Activated CD4-positive, alpha-beta memory T cell treated with anti-CD3 and anti-CD28 coated beads for 36 hours (primary cell): ENCODE measurements at regions of chr11 and their contacts with region 1.

Region 1: DNA sequence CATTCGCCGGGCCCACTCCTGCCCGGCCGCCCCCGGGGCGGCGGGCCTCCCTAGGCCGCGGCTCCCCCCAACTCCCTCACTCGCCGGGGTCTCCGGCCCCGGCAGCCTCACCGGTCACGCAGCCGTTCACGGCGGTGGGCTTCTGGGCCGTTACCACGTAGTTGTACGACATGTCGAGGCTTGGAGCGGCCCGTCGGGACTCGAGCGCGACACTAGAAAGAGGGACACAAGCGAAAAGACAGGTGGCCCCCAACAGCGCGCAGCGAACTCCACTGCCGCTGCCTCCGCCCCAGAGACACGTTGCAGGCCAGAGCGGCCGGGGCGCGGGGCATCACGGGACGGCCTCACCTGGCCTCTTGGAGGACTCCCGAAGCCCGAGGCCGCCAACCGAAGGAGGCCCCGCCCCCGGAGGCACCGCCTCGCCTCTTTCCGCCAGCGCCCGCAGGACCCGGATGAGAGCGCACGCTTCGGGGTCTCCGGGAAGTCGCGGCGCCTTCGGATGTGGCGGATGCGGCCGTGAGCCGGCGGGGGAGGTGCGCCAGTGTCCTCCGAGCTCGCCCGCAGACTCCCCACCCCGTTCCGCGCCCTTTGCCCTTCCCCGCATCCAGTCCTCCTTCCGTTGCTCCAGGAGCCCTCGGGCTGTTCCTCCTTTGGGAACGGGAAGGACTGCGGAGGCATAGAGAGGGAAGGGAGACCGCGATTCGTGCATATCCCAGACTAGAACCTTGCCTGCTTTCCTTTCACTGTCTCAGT is at the starts of genes DDB1 and TKFC:
- DNase-seq: peak; percentile 99
- H3K4me3 Mint-ChIP-seq: peak within 1 kb of the TSS; percentile 97
- H3K27ac Mint-ChIP-seq: peak within 1 kb of the TSS; percentile 97
- H3K4me1 Mint-ChIP-seq: peaks cover 55% of the 10 kb centered on the region
- H3K27me3 Mint-ChIP-seq: no peaks in the 10 kb centered on the region
- total RNA-seq, gene DDB1: 222 to 223 TPM
- total RNA-seq, gene TKFC: 118 to 120 TPM

Region 2: GRCh38 chr11:60913793-60914632 is 419.0 kb before region 1 on chr11 and contains the start of gene TMEM109:
- CTCF ChIA-PET with region 1: interaction called, 3 read pairs
- POLR2A ChIA-PET with region 1: no interaction called
- intact Hi-C with region 1: loop called (anchors 10 kb)
- DNase-seq: peak; percentile 92
- H3K4me3 Mint-ChIP-seq: peak within 1 kb of the TSS; percentile 92
- H3K27ac Mint-ChIP-seq: peak within 1 kb of the TSS; percentile 91
- H3K4me1 Mint-ChIP-seq: peaks cover 56% of the 10 kb centered on the region
- H3K27me3 Mint-ChIP-seq: no peaks in the 10 kb centered on the region
- total RNA-seq, gene TMEM109: 101 to 106 TPM

Region 3: DNA sequence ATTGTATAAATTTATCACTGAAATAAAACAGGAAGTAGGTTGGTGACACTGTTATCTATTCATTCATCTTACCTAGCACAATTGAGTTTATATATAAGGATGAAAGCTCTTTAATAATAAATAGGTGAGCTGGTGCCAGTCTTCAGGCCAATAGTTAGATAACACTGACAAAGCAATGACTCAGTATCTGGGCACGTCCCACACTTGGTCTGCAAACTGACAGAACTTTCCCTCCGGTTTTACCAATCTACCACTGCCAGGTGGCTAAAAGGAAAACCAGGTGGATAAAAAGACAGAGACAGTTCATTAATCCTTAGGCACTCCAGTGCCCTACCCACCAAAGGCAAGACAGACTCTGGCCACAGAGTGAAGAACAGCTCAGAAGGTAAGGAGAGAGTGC is 17.7 kb before region 1 on chr11:
- CTCF ChIA-PET with region 1: interaction called, 12 read pairs
- POLR2A ChIA-PET with region 1: interaction called, 4 read pairs
- intact Hi-C with region 1: no loop called
- DNase-seq: no peak
- H3K4me3 Mint-ChIP-seq: no peak overlapping the region
- H3K27ac Mint-ChIP-seq: no peak overlapping the region
- H3K4me1 Mint-ChIP-seq: no peaks in the 10 kb centered on the region
- H3K27me3 Mint-ChIP-seq: no peaks in the 10 kb centered on the region

Region 4: GRCh38 chr11:61361686-61362541 is 28.9 kb after region 1 on chr11 and contains the starts of genes CYB561A3 and TMEM138:
- CTCF ChIA-PET with region 1: interaction called, 89 read pairs
- POLR2A ChIA-PET with region 1: interaction called, 30 read pairs
- intact Hi-C with region 1: loop called (anchors 1 kb)
- DNase-seq: peak; percentile 95
- H3K4me3 Mint-ChIP-seq: peak within 1 kb of the TSS; percentile 100
- H3K27ac Mint-ChIP-seq: peak within 1 kb of the TSS; percentile 96
- H3K4me1 Mint-ChIP-seq: peaks cover 32% of the 10 kb centered on the region
- H3K27me3 Mint-ChIP-seq: no peaks in the 10 kb centered on the region
- total RNA-seq, gene CYB561A3: 32.3 to 32.9 TPM
- total RNA-seq, gene TMEM138: 33.7 to 34.6 TPM

Region 5: GRCh38 chr11:61384271-61385242 is 51.6 kb after region 1 on chr11:
- CTCF ChIA-PET with region 1: interaction called, 310 read pairs
- POLR2A ChIA-PET with region 1: interaction called, 15 read pairs
- intact Hi-C with region 1: loop called (anchors 1 kb)
- DNase-seq: no peak
- H3K4me3 Mint-ChIP-seq: no peak overlapping the region
- H3K27ac Mint-ChIP-seq: no peak overlapping the region
- H3K4me1 Mint-ChIP-seq: peaks cover 4% of the 10 kb centered on the region
- H3K27me3 Mint-ChIP-seq: no peaks in the 10 kb centered on the region

Region 6: DNA sequence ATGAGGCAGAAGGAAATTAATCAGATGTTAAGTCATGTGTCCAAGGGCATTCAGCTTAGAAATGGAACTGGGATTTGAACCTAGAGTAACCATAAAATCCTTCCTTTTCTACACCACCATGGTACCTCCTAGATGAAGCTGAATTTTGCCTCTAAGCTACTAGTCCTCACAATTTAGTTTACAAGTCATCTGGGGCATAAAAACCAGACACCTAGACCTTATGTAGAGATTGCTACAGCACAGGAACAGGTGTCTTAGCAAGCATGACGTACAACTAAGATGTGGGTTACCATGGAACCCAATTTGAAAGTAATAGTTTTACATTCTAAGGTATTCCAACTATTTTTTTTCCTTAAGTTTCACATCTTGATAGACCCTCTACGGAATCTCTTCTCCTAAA is 68.6 kb after region 1 on chr11:
- CTCF ChIA-PET with region 1: interaction called, 13 read pairs
- POLR2A ChIA-PET with region 1: no interaction called
- intact Hi-C with region 1: no loop called
- DNase-seq: no peak
- H3K4me3 Mint-ChIP-seq: no peak overlapping the region
- H3K27ac Mint-ChIP-seq: no peak overlapping the region
- H3K4me1 Mint-ChIP-seq: peaks cover 1% of the 10 kb centered on the region
- H3K27me3 Mint-ChIP-seq: no peaks in the 10 kb centered on the region

Region 7: GRCh38 chr11:61516675-61517572 is 184.0 kb after region 1 on chr11:
- CTCF ChIA-PET with region 1: interaction called, 4 read pairs
- POLR2A ChIA-PET with region 1: no interaction called
- intact Hi-C with region 1: loop called (anchors 1 kb)
- DNase-seq: peak; percentile 60
- H3K4me3 Mint-ChIP-seq: peak overlapping the region; percentile 24
- H3K27ac Mint-ChIP-seq: no peak overlapping the region
- H3K4me1 Mint-ChIP-seq: peaks cover 7% of the 10 kb centered on the region
- H3K27me3 Mint-ChIP-seq: peaks cover 18% of the 10 kb centered on the region

Region 8: DNA sequence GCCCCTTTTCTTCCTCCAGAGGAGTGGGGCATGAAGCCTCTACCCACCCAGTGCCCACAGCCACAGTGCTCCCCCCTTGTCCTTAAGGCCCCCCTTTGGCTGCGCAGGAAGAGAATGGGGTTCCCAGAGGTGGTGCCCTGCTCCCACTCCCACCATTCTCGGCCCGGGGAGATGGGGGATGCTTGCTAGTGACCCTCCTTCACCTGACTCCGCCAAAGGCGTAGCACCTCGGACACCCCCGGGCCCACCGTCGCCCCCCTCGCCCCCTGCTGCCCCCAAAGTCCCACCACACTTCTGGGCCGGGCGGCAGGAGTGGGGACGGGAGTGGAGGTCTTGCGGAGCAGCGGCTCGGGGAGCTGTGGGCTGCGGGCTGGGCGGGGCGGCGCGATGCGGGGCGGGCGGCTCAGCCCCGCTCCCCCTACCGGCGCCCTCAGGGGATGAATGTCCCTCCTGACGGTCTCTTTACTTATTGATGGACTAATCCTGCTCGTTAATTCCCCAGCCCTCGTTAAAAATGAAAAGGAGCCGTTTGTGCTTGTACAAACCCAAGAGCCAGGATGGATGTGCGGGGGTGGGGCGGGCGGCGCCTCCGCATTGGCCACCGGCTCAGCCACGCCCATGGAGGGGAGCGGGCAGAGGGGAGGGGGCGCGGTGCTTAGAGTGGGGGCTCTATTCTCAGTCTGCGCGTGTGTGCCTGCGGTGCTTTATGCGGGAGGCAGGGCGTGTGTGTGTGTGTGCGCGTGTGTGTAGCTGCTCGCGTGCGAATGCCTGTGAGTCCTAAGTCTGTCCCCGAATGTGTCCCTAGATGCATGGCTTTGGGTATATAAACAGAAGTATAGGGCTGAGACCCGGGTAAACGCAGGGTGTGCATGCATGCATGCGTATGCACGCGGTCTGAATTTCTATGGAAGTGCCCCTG is 222.3 kb after region 1 on chr11:
- CTCF ChIA-PET with region 1: no interaction called
- POLR2A ChIA-PET with region 1: no interaction called
- intact Hi-C with region 1: no loop called
- DNase-seq: no peak
- H3K4me3 Mint-ChIP-seq: no peak overlapping the region
- H3K27ac Mint-ChIP-seq: no peak overlapping the region
- H3K4me1 Mint-ChIP-seq: peaks cover 10% of the 10 kb centered on the region
- H3K27me3 Mint-ChIP-seq: peaks cover 52% of the 10 kb centered on the region